ENCODE measurements at regions of chr6 and their contacts with region 1.

Region 1: GRCh38 chr6:71855406-71855805 is 30.9 kb upstream of the RIMS1 start:
- DNase-seq: peak; percentile 92
- H3K4me3 ChIP-seq: no peak overlapping the region
- H3K27ac ChIP-seq: no peak overlapping the region
- H3K4me1 ChIP-seq: peaks cover 12% of the 10 kb centered on the region
- H3K27me3 ChIP-seq: no peaks in the 10 kb centered on the region
- CTCF ChIP-seq: peak; percentile 54

Region 2: GRCh38 chr6:72547020-72547419 is 691.6 kb after region 1 on chr6:
- CTCF ChIA-PET with region 1: no interaction called
- POLR2A ChIA-PET with region 1: interaction called, 11 read pairs
- intact Hi-C with region 1: no loop called
- DNase-seq: no peak
- H3K4me3 ChIP-seq: no peak overlapping the region
- H3K27ac ChIP-seq: no peak overlapping the region
- H3K4me1 ChIP-seq: no peaks in the 10 kb centered on the region
- H3K27me3 ChIP-seq: no peaks in the 10 kb centered on the region
- CTCF ChIP-seq: no peak

Measured in A673 (cell line).